Activated CD4-positive, alpha-beta memory T cell treated with anti-CD3 and anti-CD28 coated beads for 36 hours (primary cell): ENCODE measurements at regions of chr2 and their contacts with region 1.

Region 1: GRCh38 chr2:64523666-64524603 is at the start of gene AFTPH:
- DNase-seq: peak; percentile 100
- H3K4me3 Mint-ChIP-seq: peak within 1 kb of the TSS; percentile 99
- H3K27ac Mint-ChIP-seq: peak within 1 kb of the TSS; percentile 98
- H3K4me1 Mint-ChIP-seq: peaks cover 31% of the 10 kb centered on the region
- H3K27me3 Mint-ChIP-seq: peaks cover 2% of the 10 kb centered on the region
- total RNA-seq, gene AFTPH: 34.8 to 36.4 TPM

Region 2: DNA sequence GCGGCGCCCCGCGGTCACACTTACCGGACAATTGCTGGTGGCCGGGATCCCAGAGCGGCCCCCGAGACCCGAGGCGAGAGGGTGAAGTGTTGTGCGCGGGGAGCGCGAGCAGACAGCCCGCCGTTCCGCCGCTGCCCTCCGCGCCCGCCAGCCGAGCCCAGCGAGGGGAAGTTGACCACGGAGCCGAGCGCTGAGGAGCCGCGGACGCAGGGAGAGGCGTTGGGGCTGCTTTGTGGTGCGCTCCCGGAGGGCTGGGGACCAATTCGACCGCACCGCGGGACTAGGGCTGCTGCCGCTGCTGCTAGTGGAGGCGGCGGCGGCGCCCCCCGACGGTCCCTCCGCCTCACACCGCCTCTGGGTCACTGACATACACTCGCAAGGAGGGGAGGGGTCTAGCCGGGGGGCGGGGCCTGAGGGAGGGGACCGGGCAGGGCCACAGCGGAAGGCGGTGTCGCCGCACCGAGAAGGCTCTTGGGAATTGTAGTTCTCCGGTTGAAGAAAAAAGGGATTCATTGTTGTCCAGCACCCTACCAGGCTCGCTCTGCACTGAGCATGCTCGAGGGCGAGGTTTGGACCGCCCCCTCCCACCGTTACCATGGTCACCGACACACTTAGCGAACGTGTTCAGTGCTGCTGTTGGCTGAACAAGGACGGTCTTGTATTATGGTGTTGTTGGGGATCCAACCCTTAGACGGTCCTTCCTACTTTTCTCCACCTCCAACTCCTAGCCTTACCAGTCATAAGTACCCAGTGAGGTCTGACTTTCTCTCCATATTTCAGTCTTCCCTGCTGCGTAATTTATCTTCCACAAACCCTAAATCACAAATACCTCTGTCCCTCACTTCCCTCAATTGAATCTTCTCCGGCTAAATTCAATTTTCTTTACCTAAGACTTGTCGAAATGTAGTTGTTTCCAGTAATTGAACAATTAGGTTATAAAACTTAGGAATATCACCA is 379.6 kb before region 1 on chr2 and contains the start of gene PELI1:
- CTCF ChIA-PET with region 1: interaction called, 3 read pairs
- POLR2A ChIA-PET with region 1: no interaction called
- intact Hi-C with region 1: loop called (anchors 1 kb)
- DNase-seq: peak; percentile 97
- H3K4me3 Mint-ChIP-seq: peak within 1 kb of the TSS; percentile 96
- H3K27ac Mint-ChIP-seq: peak within 1 kb of the TSS; percentile 97
- H3K4me1 Mint-ChIP-seq: peaks cover 24% of the 10 kb centered on the region
- H3K27me3 Mint-ChIP-seq: no peaks in the 10 kb centered on the region
- total RNA-seq, gene PELI1: 38.4 to 42.9 TPM

Region 3: GRCh38 chr2:64538764-64539433 is 15.0 kb after region 1 on chr2:
- CTCF ChIA-PET with region 1: interaction called, 16 read pairs
- POLR2A ChIA-PET with region 1: interaction called, 6 read pairs
- intact Hi-C with region 1: loop called (anchors 1 kb)
- DNase-seq: peak; percentile 20
- H3K4me3 Mint-ChIP-seq: no peak overlapping the region
- H3K27ac Mint-ChIP-seq: peak overlapping the region; percentile 48
- H3K4me1 Mint-ChIP-seq: peaks cover 76% of the 10 kb centered on the region
- H3K27me3 Mint-ChIP-seq: no peaks in the 10 kb centered on the region

Region 4: GRCh38 chr2:64586883-64587481 is 63.0 kb after region 1 on chr2:
- CTCF ChIA-PET with region 1: interaction called, 16 read pairs
- POLR2A ChIA-PET with region 1: no interaction called
- intact Hi-C with region 1: no loop called
- DNase-seq: no peak
- H3K4me3 Mint-ChIP-seq: no peak overlapping the region
- H3K27ac Mint-ChIP-seq: no peak overlapping the region
- H3K4me1 Mint-ChIP-seq: peaks cover 10% of the 10 kb centered on the region
- H3K27me3 Mint-ChIP-seq: no peaks in the 10 kb centered on the region

Region 5: DNA sequence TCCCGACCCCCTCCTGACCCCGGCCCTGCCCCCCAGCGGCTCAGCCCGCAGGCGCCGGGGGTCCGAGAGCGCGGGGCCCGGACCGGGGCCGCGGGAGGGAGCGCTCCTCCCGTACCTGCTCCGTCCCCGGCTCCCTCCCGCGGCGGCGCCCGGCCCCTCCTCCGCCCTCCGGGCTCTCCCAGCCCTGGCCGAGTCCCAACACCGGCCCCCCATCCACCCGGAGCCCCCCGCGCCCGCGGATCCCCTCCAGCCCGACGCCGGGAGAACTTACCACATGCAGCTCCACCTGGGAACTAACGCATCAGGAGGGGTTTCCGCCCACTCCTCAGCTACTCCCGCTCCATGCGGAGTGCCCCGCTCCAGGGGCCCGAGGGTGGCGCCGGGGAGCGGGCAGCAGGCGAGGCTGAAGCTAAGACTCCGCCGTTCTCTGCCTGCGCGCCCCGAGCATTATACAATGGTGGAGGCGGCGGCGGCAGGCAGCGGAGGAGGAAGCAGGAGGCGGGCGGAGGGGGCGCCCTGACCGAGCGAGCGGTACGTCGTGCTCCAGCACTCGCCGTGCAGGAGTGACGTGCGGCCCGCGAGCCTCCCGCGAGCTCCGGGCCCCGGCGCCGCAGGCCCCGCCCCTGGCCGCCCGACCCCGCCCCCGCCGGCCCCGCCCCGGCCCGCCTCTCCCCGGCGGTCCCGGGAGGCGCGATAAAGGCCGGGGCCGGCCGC is 129.6 kb after region 1 on chr2 and contains the start of gene SERTAD2:
- CTCF ChIA-PET with region 1: interaction called, 16 read pairs
- POLR2A ChIA-PET with region 1: interaction called, 23 read pairs
- intact Hi-C with region 1: loop called (anchors 2 kb)
- DNase-seq: peak; percentile 86
- H3K4me3 Mint-ChIP-seq: peak within 1 kb of the TSS; percentile 79
- H3K27ac Mint-ChIP-seq: peak within 1 kb of the TSS; percentile 72
- H3K4me1 Mint-ChIP-seq: peaks cover 51% of the 10 kb centered on the region
- H3K27me3 Mint-ChIP-seq: no peaks in the 10 kb centered on the region
- total RNA-seq, gene SERTAD2: 11.3 to 11.4 TPM

Region 6: GRCh38 chr2:64831134-64831976 is 307.4 kb after region 1 on chr2:
- CTCF ChIA-PET with region 1: interaction called, 8 read pairs
- POLR2A ChIA-PET with region 1: no interaction called
- intact Hi-C with region 1: loop called (anchors 1 kb)
- DNase-seq: peak; percentile 97
- H3K4me3 Mint-ChIP-seq: peak overlapping the region; percentile 57
- H3K27ac Mint-ChIP-seq: peak overlapping the region; percentile 86
- H3K4me1 Mint-ChIP-seq: peaks cover 11% of the 10 kb centered on the region
- H3K27me3 Mint-ChIP-seq: no peaks in the 10 kb centered on the region

Region 7: DNA sequence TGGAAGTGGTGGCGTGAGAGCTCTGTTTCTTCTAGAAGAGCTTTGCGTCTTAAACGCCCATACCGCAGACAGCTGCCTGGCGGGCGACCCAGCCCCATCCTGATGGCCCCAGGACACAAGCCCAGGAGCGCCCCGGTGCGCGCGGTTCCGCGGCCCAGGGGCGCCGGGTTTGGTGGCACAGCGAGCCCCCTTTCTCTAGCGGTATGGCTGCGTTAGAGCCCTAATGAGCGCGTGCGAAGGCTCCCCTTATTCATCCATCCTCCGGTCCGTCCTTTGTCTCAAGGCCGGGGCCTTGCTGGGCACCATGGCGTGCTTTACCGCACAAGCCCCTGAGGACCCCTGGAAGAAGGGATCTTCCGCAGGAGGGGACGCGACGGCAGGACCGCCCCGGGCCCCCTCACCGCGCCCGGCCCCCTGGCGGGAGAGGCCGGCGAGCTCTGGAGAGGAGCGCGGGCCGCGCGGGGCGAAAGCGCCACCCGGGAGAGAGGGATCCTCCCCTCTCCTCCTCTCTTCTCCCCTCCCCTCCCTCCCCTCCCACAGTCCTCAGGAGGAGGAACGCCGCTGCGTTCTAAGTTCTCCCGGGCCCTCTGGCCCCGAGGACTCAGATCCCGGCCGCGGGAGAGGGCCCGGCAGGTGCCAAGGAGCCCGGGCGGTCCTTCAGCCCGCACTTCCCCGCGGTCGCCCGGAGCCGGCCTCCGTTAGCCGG is 464.6 kb after region 1 on chr2:
- CTCF ChIA-PET with region 1: no interaction called
- POLR2A ChIA-PET with region 1: no interaction called
- intact Hi-C with region 1: loop called (anchors 2 kb)
- DNase-seq: peak; percentile 81
- H3K4me3 Mint-ChIP-seq: peak overlapping the region; percentile 59
- H3K27ac Mint-ChIP-seq: peak overlapping the region; percentile 65
- H3K4me1 Mint-ChIP-seq: peaks cover 54% of the 10 kb centered on the region
- H3K27me3 Mint-ChIP-seq: peaks cover 5% of the 10 kb centered on the region

Region 8: GRCh38 chr2:65240657-65241056 is 716.7 kb after region 1 on chr2:
- CTCF ChIA-PET with region 1: no interaction called
- POLR2A ChIA-PET with region 1: no interaction called
- intact Hi-C with region 1: no loop called
- DNase-seq: no peak
- H3K4me3 Mint-ChIP-seq: no peak overlapping the region
- H3K27ac Mint-ChIP-seq: no peak overlapping the region
- H3K4me1 Mint-ChIP-seq: peaks cover 31% of the 10 kb centered on the region
- H3K27me3 Mint-ChIP-seq: no peaks in the 10 kb centered on the region